Activated B cell treated with CpG ODN at 0.5 μM for 24 hours (primary cell): ENCODE measurements at regions of chr1 and their contacts with region 1.

Region 1: DNA sequence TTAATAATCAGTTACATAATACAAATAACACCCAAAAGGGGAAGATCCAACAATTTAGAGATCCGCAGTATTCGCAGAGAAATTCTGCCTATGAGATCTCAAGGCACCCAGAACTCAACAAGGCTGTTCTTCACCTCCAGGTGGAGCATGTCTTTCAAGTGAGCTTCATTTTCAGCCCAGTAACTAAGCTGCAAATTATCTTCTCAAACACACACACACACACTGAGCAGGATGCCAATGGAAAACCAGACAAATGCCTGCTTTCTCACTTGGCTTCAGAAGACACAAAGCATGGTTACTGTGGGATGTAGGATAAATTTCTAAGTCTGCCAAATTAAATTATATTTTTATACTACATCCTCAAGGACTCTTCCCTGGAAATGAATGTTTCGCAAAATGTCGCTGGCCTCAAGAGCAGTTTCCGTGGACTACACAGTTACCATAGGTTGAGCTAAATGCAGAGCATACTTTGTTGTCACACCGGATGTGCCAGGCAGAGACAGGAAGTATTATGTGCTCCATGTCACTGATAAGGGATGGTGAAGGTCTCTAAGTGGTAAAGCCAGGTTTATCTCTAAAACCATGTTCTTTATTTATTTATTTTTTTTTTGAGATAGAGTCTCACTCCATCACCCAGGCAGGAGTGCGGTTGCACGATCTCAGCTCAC is 30.3 kb downstream of the UBR4 start:
- DNase-seq: no peak
- ATAC-seq: no peak
- H3K4me3 Mint-ChIP-seq: no peak overlapping the region
- H3K27ac Mint-ChIP-seq: no peak overlapping the region
- H3K4me1 Mint-ChIP-seq: no peaks in the 10 kb centered on the region
- H3K27me3 Mint-ChIP-seq: no peaks in the 10 kb centered on the region
- CTCF ChIP-seq: no peak

Region 2: DNA sequence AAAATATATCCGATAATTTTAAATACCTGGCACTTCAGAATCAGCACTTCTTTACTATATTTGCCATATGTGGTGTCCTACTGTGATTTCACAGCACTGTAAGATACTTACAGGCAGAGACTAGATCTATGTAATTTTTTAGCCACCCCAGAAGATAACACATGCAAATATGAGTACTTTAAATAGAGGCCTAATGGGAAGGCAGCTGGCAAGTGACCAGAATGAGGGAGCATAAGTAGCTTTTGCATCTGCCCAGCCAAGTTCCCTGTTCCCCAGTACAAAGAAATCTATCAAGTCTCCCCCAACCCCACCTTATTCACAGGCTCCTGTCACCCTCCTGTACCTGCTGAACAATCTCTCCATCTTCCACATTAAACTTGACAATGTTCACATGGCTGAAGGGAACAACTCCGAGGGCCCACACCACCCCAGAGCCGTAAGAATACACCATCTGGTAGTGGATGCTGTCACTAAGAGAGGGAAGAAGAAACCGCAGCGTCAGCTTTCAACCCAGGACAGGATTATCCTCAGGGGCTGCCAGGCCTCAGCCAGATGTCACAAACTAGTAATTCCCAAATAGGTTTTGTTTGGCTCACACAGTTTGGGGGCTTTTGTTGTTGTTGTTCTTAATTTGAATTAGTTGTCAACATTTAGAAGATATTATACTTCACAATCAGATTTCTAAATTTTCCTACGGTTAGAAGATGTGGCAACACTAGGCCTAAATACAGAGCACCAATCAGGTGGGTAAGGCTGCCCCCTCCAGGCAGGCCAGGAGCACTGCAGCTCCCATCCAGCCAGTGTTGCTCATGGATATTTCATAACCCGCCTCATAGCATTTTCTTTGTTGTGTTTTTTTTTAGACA is 61.2 kb after region 1 on chr1:
- CTCF ChIA-PET with region 1: interaction called, 9 read pairs
- POLR2A ChIA-PET with region 1: no interaction called
- intact Hi-C with region 1: loop called (anchors 2 kb)
- DNase-seq: peak; percentile 52
- ATAC-seq: peak; percentile 99
- H3K4me3 Mint-ChIP-seq: no peak overlapping the region
- H3K27ac Mint-ChIP-seq: no peak overlapping the region
- H3K4me1 Mint-ChIP-seq: no peaks in the 10 kb centered on the region
- H3K27me3 Mint-ChIP-seq: no peaks in the 10 kb centered on the region
- CTCF ChIP-seq: peak; percentile 95